ENCODE measurements at regions of chr12 and their contacts with region 1.

Region 1: DNA sequence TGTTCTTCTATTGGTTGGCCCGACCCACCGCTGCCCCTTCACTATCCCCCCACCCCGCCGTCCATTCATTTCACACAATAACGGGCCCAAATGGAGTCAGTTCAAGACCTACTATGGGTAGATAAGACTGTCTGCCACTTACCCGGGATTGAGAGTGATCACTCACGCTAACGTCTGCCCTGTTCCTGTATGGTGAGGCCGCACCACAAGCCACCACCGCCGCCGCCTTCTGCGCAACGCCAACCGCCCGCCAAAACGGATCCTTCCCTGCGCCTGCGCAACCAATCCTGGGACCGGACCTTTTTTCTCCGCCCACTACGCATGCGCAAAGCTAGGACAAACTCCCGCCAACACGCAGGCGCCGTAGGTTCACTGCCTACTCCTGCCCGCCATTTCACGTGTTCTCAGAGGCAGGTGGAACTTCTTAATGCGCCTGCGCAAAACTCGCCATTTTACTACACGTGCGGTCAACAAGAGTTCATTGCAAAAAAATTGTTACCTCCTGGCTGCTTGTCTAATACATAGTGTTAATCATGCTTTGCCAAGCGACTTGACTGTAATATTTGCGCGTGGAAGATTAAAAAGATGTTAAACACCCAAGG is at the start of gene CBX5:
- DNase-seq: peak; percentile 98 to 100 (median 100)
- ATAC-seq: peak; percentile 63
- H3K4me3 ChIP-seq: peak within 1 kb of the TSS; percentile 97
- H3K4me3 Mint-ChIP-seq: no peak within 1 kb of the TSS
- H3K27ac ChIP-seq: peak within 1 kb of the TSS; percentile 92
- H3K27ac Mint-ChIP-seq: no peak within 1 kb of the TSS
- H3K4me1 ChIP-seq: peaks cover 46 to 52% of the 10 kb centered on the region in 2 donors
- H3K4me1 Mint-ChIP-seq: peaks cover 16 to 57% (median 47%) of the 10 kb centered on the region in 7 donors
- H3K27me3 ChIP-seq: no peaks in the 10 kb centered on the region
- H3K27me3 Mint-ChIP-seq: no peaks in the 10 kb centered on the region
- total RNA-seq, gene CBX5: 40.3 to 133 (median 77.2) TPM

Region 2: GRCh38 chr12:53727310-53728041 is 552.5 kb before region 1 on chr12 and contains the start of gene CALCOCO1:
- CTCF ChIA-PET with region 1: no interaction called
- POLR2A ChIA-PET with region 1: no interaction called
- intact Hi-C with region 1: loop called (anchors 1 to 5 kb)
- DNase-seq: peak; percentile 84 to 98 (median 95)
- ATAC-seq: peak; percentile 98
- H3K4me3 ChIP-seq: peak within 1 kb of the TSS; percentile 94
- H3K4me3 Mint-ChIP-seq: peak within 1 kb of the TSS; percentile 91 to 100 (median 94)
- H3K27ac ChIP-seq: peak within 1 kb of the TSS; percentile 73
- H3K27ac Mint-ChIP-seq: peak within 1 kb of the TSS; percentile 69 to 98 (median 91)
- H3K4me1 ChIP-seq: peaks cover 13 to 17% of the 10 kb centered on the region in 2 donors
- H3K4me1 Mint-ChIP-seq: peaks cover 10 to 41% (median 32%) of the 10 kb centered on the region in 7 donors
- H3K27me3 ChIP-seq: no peaks in the 10 kb centered on the region
- H3K27me3 Mint-ChIP-seq: peaks cover 0 to 13% (median 0%) of the 10 kb centered on the region in 5 donors
- total RNA-seq, gene CALCOCO1: 66.1 to 175 (median 137) TPM

Region 3: GRCh38 chr12:54214553-54215406 is 65.2 kb before region 1 on chr12:
- CTCF ChIA-PET with region 1: interaction called, 3 read pairs
- POLR2A ChIA-PET with region 1: interaction called, 9 read pairs
- intact Hi-C with region 1: loop called (anchors 1 to 2 kb)
- DNase-seq: peak; percentile 80 to 90 (median 89)
- ATAC-seq: peak; percentile 95
- H3K4me3 ChIP-seq: peak overlapping the region; percentile 56
- H3K4me3 Mint-ChIP-seq: peak overlapping the region; percentile 72 to 93 (median 82)
- H3K27ac ChIP-seq: no peak overlapping the region
- H3K27ac Mint-ChIP-seq: peak overlapping the region in 2 of 9 donors; percentile 28 to 52
- H3K4me1 ChIP-seq: peaks cover 25 to 35% of the 10 kb centered on the region in 2 donors
- H3K4me1 Mint-ChIP-seq: peaks cover 18 to 52% (median 31%) of the 10 kb centered on the region in 7 donors
- H3K27me3 ChIP-seq: no peaks in the 10 kb centered on the region
- H3K27me3 Mint-ChIP-seq: peaks cover 0 to 40% (median 5%) of the 10 kb centered on the region in 5 donors

Region 4: DNA sequence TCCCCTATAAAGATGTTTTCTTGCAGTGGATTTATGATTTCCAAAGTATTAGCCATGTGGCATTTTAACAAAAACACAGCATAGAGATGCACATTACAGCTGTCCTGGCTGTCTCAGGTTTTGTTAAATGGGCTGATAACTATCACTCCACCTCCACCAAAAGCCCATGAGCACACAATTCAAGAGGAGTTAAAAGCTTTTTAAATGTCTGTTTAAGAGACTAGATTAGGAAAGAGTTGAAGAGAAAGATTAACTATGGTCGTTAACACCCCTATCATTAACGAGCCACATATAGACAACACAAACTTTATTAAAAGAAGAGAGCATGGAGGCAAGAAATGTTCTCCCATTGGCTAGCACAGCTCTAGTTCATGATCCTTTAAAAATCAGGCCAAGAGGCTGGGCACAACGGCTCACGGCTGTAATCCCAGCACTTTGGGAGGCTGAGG is 14.6 kb before region 1 on chr12:
- CTCF ChIA-PET with region 1: interaction called, 3 read pairs
- POLR2A ChIA-PET with region 1: interaction called, 21 read pairs
- intact Hi-C with region 1: loop called in 1 of 2 experiments (anchors 1 kb)
- DNase-seq: no peak
- ATAC-seq: no peak
- H3K4me3 ChIP-seq: no peak overlapping the region
- H3K4me3 Mint-ChIP-seq: no peak overlapping the region
- H3K27ac ChIP-seq: no peak overlapping the region
- H3K27ac Mint-ChIP-seq: peak overlapping the region in 1 of 9 donors; percentile 34
- H3K4me1 ChIP-seq: no peaks in the 10 kb centered on the region
- H3K4me1 Mint-ChIP-seq: peaks cover 12 to 42% (median 28%) of the 10 kb centered on the region in 7 donors
- H3K27me3 ChIP-seq: no peaks in the 10 kb centered on the region
- H3K27me3 Mint-ChIP-seq: no peaks in the 10 kb centered on the region

Region 5: DNA sequence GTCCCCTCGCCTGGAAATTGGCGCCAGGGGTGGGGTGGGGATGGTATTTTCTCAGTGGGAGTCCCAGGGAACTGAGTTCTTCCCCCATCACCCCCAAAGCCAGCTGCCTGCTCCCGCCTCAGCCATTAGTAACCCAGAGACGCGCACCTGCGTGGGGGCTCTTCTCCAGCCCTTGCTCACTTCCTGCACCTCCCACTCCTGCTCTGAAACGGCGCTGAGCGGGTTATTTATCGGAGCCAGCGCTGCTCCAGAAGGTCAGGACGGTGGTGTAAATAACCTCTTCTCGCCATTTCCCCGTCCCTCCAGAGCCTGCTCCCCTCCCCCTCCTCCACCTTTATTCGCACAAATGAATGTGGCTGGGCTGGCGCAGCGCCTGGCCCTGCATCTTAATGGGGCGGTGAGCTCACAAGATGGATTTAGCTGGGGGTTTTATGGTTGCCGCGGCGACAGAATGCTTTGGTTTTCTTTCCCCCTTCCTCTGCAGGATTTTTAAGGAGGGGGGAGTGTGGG is 72.1 kb after region 1 on chr12:
- CTCF ChIA-PET with region 1: no interaction called
- POLR2A ChIA-PET with region 1: interaction called, 68 read pairs
- intact Hi-C with region 1: no loop called
- DNase-seq: peak in 8 of 9 donors; percentile 11 to 62 (median 35)
- ATAC-seq: peak; percentile 65
- H3K4me3 ChIP-seq: peak overlapping the region; percentile 43
- H3K4me3 Mint-ChIP-seq: peak overlapping the region; percentile 70 to 93 (median 85)
- H3K27ac ChIP-seq: peak overlapping the region; percentile 63
- H3K27ac Mint-ChIP-seq: peak overlapping the region; percentile 58 to 93 (median 85)
- H3K4me1 ChIP-seq: peaks cover 0 to 9% of the 10 kb centered on the region in 2 donors
- H3K4me1 Mint-ChIP-seq: peaks cover 11 to 30% (median 18%) of the 10 kb centered on the region in 7 donors
- H3K27me3 ChIP-seq: no peaks in the 10 kb centered on the region
- H3K27me3 Mint-ChIP-seq: no peaks in the 10 kb centered on the region

Region 6: GRCh38 chr12:54379401-54380201 is 99.6 kb after region 1 on chr12:
- CTCF ChIA-PET with region 1: interaction called, 3 read pairs
- POLR2A ChIA-PET with region 1: interaction called, 12 read pairs
- intact Hi-C with region 1: no loop called
- DNase-seq: peak; percentile 73 to 93 (median 84)
- ATAC-seq: peak; percentile 87
- H3K4me3 ChIP-seq: no peak overlapping the region
- H3K4me3 Mint-ChIP-seq: peak overlapping the region; percentile 43 to 79 (median 59)
- H3K27ac ChIP-seq: no peak overlapping the region
- H3K27ac Mint-ChIP-seq: peak overlapping the region in 3 of 9 donors; percentile 0 to 46 (median 38)
- H3K4me1 ChIP-seq: peaks cover 0 to 3% of the 10 kb centered on the region in 2 donors
- H3K4me1 Mint-ChIP-seq: peaks cover 6 to 19% (median 6%) of the 10 kb centered on the region in 7 donors
- H3K27me3 ChIP-seq: no peaks in the 10 kb centered on the region
- H3K27me3 Mint-ChIP-seq: peaks cover 0 to 5% (median 0%) of the 10 kb centered on the region in 5 donors